ENCODE measurements at regions of chr1 and their contacts with region 1.

Region 1: GRCh38 chr1:116485071-116485735 is 85.6 kb downstream of the CD58 start:
- DNase-seq: peak; percentile 89 to 92
- ATAC-seq: peak; percentile 83 to 93 (median 88)
- H3K4me3 ChIP-seq: no peak overlapping the region
- H3K27ac ChIP-seq: peak overlapping the region in 2 of 10 donors; percentile 33 to 39
- H3K4me1 ChIP-seq: peaks cover 9 to 42% (median 26%) of the 10 kb centered on the region in 9 donors
- H3K27me3 ChIP-seq: no peaks in the 10 kb centered on the region
- CTCF ChIP-seq: peak; percentile 80 to 98 (median 96)

Region 2: DNA sequence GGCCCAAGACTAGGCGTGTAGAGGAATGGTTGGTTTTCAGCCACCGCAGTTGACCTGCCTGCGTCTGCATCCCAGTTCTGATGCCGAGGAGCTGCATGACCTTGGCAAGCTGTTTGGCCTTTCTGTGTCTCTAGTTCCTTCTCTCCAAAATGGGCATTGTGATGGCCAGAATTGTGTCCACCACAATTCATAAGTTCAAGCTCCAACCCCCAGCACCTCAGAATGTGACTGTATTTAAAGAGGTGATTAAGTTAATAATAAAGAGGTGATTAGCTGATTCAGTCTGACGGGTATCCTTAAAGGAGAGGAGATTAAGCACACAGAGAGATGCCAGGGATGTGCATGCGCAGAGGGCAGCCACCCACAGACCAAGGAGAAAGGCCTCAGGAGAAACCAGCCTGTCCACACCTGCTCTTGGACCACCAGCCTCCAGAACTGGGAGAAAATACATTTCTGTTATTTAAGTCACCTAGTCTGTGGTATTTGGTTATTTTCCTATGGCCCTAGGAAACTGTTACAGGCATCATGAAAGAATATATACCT is 345.5 kb before region 1 on chr1:
- intact Hi-C with region 1: loop called in 7 of 10 experiments (anchors 1 to 5 kb)
- DNase-seq: no peak
- ATAC-seq: peak in 1 of 8 donors; percentile 38
- H3K4me3 ChIP-seq: no peak overlapping the region
- H3K27ac ChIP-seq: no peak overlapping the region
- H3K4me1 ChIP-seq: peaks cover 0 to 8% (median 0%) of the 10 kb centered on the region in 9 donors
- H3K27me3 ChIP-seq: no peaks in the 10 kb centered on the region
- CTCF ChIP-seq: no peak

Region 3: GRCh38 chr1:116159177-116159576 is 326.0 kb before region 1 on chr1:
- intact Hi-C with region 1: loop called in 5 of 10 experiments (anchors 5 kb)
- DNase-seq: no peak
- ATAC-seq: no peak
- H3K4me3 ChIP-seq: no peak overlapping the region
- H3K27ac ChIP-seq: no peak overlapping the region
- H3K4me1 ChIP-seq: peaks cover 0 to 6% (median 0%) of the 10 kb centered on the region in 9 donors
- H3K27me3 ChIP-seq: no peaks in the 10 kb centered on the region
- CTCF ChIP-seq: no peak

Region 4: DNA sequence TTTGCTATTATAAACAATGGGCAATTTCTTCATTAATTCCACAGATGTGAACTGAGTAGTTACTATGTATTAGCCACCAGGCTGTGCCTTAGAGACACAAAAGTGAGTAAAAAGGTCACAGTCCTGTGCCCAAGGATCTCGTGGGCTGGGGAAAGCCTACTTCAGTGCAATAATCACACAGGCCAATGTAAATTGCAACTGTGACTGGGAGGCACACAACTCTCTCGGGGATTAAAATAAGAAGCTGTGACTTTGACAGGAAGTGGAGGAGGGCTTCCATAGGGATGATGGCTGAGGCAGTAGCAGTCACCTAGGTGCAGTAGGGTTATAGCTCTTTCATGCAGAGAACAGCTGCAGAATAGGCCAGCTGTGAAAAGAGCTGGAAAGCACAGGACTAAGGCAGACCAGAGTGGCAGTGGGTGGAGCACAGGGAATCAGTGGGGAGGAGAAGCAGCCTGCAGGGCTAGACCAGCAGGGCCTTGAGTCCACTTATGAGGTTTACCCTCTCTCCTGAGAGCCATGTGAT is 252.2 kb before region 1 on chr1:
- intact Hi-C with region 1: loop called in 1 of 10 experiments (anchors 10 kb)
- DNase-seq: no peak
- ATAC-seq: peak in 3 of 8 donors; percentile 34 to 57 (median 42)
- H3K4me3 ChIP-seq: no peak overlapping the region
- H3K27ac ChIP-seq: no peak overlapping the region
- H3K4me1 ChIP-seq: peaks cover 0 to 6% (median 0%) of the 10 kb centered on the region in 9 donors
- H3K27me3 ChIP-seq: no peaks in the 10 kb centered on the region
- CTCF ChIP-seq: peak in 5 of 9 donors; percentile 5 to 25 (median 16)

Region 5: GRCh38 chr1:116377541-116378529 is 107.4 kb before region 1 on chr1:
- intact Hi-C with region 1: loop called in 2 of 10 experiments (anchors 5 kb)
- DNase-seq: peak; percentile 57 to 62
- ATAC-seq: peak in 7 of 8 donors; percentile 18 to 51 (median 47)
- H3K4me3 ChIP-seq: peak overlapping the region in 7 of 10 donors; percentile 3 to 88 (median 29)
- H3K27ac ChIP-seq: peak overlapping the region; percentile 91 to 98 (median 97)
- H3K4me1 ChIP-seq: peaks cover 28 to 92% (median 86%) of the 10 kb centered on the region in 9 donors
- H3K27me3 ChIP-seq: no peaks in the 10 kb centered on the region
- CTCF ChIP-seq: no peak

Region 6: DNA sequence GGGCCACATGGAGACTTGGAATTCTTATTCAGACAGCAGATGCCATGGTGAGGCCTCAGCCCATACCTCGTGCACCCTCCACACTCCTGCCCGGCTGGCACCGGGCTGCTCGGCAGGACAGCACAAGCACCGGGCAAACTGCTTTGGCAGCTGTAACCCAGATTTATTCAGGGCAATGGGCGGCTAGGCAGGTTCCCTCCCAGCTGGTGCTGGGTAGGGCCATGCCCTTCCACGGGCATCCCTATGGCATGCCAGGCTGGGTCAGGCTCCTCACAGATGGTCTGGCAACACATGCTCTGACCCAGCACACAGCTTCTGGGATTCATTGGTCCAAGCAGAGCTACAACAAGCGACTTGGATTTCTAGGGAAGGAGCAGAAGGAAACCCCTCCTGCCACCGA is 58.8 kb before region 1 on chr1:
- intact Hi-C with region 1: loop called in 1 of 10 experiments (anchors 10 kb)
- DNase-seq: no peak
- ATAC-seq: no peak
- H3K4me3 ChIP-seq: no peak overlapping the region
- H3K27ac ChIP-seq: no peak overlapping the region
- H3K4me1 ChIP-seq: peaks cover 0 to 12% (median 9%) of the 10 kb centered on the region in 9 donors
- H3K27me3 ChIP-seq: no peaks in the 10 kb centered on the region
- CTCF ChIP-seq: no peak

Region 7: GRCh38 chr1:116962987-116963639 is 477.9 kb after region 1 on chr1:
- intact Hi-C with region 1: no loop called
- DNase-seq: no peak
- ATAC-seq: no peak
- H3K4me3 ChIP-seq: no peak overlapping the region
- H3K27ac ChIP-seq: no peak overlapping the region
- H3K4me1 ChIP-seq: peaks cover 0 to 21% (median 5%) of the 10 kb centered on the region in 9 donors
- H3K27me3 ChIP-seq: no peaks in the 10 kb centered on the region
- CTCF ChIP-seq: no peak

Measured in heart right ventricle (tissue), 16 donors.